ENCODE measurements at regions of chr18 and their contacts with region 1.

Region 1: DNA sequence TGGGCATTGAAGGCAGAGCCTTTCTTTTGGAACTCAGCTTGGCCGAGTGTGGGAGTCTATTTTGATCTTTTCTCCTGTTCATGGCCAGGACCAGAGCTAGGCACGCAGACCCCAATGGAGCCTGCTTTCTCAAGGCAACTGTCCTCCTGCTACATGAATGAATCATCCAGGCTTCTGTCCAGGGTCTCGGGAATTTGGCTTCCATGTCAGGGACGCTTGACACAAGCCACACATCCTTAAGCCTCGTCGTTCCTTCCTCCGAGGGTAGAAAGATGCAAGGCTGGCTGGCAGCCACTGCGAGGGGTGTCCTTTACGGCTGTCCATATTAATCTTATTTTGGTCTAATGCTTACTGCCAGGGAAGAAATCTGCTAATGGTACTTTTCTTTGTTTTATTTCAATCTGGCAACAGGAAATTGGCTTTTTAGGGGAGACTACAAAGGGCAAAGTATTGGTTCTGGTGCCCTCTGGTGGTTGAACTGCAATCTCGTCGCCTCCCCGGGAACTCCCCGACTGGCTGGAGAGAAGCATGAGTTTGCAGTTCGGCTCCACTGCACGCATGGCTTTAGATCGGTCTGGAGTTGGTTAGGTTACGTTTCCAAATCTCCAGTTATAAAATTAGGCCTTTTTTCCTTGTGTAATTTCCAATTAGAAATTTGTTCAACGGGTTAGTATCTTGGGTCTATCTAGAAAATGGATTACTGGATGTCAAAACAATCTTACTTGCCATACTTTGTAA is 135.2 kb downstream of the ALPK2 start:
- DNase-seq: peak; percentile 56 to 57
- H3K4me3 ChIP-seq: no peak overlapping the region
- H3K27ac ChIP-seq: no peak overlapping the region
- H3K4me1 ChIP-seq: 0 out of 2 replicates have a peak, but pooled peaks cover 3% of the 10 kb centered on the region
- H3K27me3 ChIP-seq: no peaks in the 10 kb centered on the region; the same call in 1 of the 2 replicates
- CTCF ChIP-seq: peak; percentile 90

Region 2: GRCh38 chr18:58400337-58400870 is 93.3 kb before region 1 on chr18:
- CTCF ChIA-PET with region 1: no interaction called
- POLR2A ChIA-PET with region 1: no interaction called
- intact Hi-C with region 1: loop called (anchors 1 kb)
- DNase-seq: no peak
- H3K4me3 ChIP-seq: no peak overlapping the region
- H3K27ac ChIP-seq: no peak overlapping the region
- H3K4me1 ChIP-seq: no peaks in the 10 kb centered on the region
- H3K27me3 ChIP-seq: no peaks in the 10 kb centered on the region
- CTCF ChIP-seq: no peak

Region 3: GRCh38 chr18:58691256-58691655 is 197.6 kb after region 1 on chr18:
- CTCF ChIA-PET with region 1: interaction called, 15 read pairs
- POLR2A ChIA-PET with region 1: no interaction called
- intact Hi-C with region 1: no loop called
- DNase-seq: peak; percentile 71 to 96
- H3K4me3 ChIP-seq: peak overlapping the region; percentile 35; the same call in 1 of the 2 replicates
- H3K27ac ChIP-seq: peak overlapping the region; percentile 62
- H3K4me1 ChIP-seq: peaks cover 13% of the 10 kb centered on the region
- H3K27me3 ChIP-seq: no peaks in the 10 kb centered on the region
- CTCF ChIP-seq: no peak